WTC11 (cell line): ENCODE measurements at regions of chr17 and their contacts with region 1.

Region 1: DNA sequence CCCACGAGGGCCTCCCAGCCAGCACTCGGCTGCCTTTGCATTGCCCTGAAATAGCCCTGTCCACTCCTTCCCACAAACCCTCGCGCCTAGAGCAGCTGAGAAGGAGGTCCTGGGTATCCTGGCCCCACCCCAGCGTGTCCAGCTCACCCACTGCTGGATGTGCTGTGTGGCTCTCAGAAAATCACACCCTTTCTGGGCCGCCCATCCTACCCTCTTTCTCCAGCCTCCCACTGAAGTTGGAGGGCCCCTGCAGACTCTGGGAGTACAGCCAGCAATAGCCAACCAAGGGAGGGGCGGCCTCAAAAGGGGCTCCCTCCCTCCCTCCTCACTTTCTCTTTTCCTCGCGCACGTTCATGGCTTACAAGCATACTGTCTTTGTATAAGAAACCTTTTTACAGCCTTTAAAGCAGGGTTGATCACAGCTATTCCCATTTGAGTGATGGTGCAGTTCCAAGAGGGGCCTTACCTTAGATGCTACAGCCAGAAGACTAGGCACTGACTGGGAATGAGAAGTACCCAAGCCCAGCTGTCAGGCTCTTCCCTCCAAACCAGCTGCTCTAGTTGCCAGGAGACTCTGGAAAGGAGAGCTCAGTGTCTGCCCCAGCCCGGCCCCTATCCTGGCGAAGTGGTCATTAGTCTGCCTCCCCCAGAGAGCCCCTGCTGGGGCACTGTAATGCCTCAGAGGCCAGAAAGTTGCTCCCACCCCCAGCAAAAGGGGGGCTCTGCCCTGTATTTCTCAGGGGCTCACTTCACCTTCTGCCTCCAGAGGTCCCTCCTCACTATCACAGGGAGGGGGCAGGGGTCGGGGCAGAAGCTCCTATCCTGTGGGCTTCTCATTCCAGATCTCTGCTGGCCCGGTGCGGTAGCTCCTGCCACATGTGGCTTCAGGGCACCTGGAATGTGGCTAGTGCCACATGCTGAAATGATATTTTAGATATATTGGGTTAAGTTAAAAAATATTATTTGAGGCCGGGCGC is 38.1 kb downstream of the DCAKD start:
- DNase-seq: peak; percentile 27
- ATAC-seq: peak; percentile 57
- H3K4me3 Mint-ChIP-seq: no peak overlapping the region
- H3K27ac Mint-ChIP-seq: peak overlapping the region; percentile 21; the same call in 1 of the 2 replicates
- H3K4me1 Mint-ChIP-seq: peaks cover 22% of the 10 kb centered on the region
- H3K27me3 Mint-ChIP-seq: peaks cover 12% of the 10 kb centered on the region
- CTCF ChIP-seq: no peak

Region 2: DNA sequence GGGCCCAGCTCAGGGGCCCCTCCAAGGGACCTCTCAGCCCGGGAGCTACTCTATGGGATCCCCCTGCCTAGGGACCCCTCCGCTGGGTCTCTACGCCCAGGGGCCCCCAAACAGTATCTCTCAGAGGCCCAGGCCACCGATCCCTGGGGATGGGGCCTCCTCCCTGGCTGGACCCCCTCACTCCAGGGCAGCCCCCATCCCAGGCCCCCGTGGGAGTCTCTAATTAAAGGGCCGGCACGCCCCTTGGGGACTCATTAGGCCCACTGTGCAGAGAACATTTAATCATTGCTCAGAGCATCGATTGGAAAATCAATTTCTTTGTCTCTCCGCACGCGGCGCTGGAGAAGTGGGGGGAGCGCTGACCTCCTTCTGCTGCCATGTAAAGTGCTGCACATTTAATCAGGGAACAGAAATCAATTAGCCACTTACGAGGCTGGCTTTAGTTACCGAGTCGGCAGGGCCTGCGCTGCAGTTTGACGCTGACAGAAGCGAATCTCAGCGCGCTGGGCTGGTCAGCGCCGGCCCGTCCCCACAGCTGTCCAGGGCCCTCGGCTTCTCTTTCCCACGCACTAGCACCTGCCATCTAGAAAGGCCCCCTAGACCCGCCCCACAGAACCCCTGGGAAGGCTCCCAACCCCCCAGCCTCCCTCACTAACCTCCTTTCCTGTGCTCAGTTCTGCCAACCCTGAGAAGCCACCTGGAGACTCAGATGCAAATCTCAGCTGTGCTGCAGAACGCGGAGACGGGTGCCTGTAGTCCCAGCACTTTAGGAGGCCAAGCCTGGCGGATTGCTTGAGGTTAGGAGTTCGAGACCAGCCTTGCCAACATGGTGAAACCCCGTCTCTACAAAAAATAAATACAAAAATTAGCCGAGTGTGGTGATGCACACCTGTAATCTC is 25.0 kb before region 1 on chr17:
- CTCF ChIA-PET with region 1: interaction called, 10 read pairs
- POLR2A ChIA-PET with region 1: interaction called, 6 read pairs
- DNase-seq: peak; percentile 33
- ATAC-seq: peak; percentile 4
- H3K4me3 Mint-ChIP-seq: peak overlapping the region; percentile 67
- H3K27ac Mint-ChIP-seq: peak overlapping the region; percentile 79
- H3K4me1 Mint-ChIP-seq: peaks cover 34% of the 10 kb centered on the region
- H3K27me3 Mint-ChIP-seq: peaks cover 9% of the 10 kb centered on the region
- CTCF ChIP-seq: no peak